ENCODE measurements at regions of chr11 and their contacts with region 1.

Region 1: DNA sequence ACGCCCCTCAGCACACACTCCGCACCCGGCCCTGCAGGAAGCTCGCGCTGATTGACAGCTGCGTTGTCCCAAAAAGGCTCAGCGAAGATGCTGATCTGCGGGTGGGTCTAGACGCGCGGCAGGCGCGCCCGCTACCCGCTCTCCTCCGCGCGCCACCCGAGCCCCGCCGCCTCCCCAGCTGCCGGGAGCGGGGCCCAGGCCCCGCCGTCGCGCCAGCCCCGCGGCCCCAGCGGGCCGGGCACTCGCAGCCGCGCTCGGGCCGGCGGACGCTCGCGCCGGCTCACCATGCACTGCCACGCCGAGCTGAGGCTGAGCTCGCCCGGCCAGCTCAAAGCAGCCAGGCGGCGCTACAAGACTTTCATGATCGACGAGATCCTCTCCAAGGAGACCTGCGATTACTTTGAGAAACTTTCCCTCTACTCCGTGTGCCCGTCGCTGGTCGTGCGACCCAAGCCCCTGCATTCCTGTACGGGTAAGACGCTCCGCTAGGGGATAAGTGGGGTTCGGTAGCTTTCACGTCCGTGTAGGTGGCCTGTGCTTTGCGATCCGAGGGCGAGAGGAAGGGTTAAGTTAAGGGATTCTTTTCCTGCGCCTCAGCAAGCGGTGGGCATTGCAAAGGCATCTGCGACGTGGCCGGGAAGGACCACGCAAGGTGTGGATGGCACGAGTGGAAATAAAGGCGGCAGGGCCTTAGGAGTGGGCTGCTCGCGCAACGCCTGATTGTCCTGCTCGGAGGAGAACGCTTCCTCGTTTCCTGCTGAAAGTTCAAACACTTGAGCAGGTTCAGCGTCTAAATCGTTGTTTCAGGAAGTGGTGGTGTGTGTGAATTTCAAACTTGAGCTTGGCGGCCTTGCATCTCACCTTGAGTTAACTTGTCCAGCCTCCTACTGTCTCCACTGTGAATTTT is at the start of gene BARX2:
- DNase-seq: peak; percentile 47
- H3K4me3 ChIP-seq: no peak within 1 kb of the TSS
- H3K27ac ChIP-seq: no peak within 1 kb of the TSS
- H3K4me1 ChIP-seq: peaks cover 9% of the 10 kb centered on the region
- H3K27me3 ChIP-seq: peaks cover 59 to 71% of the 10 kb centered on the region in 2 experiments
- CTCF ChIP-seq: peak; percentile 27 to 54
- POLR2A ChIP-seq: no peak
- total RNA-seq, gene BARX2: not detected in 2 replicates

Region 2: GRCh38 chr11:129323896-129324512 is 52.0 kb before region 1 on chr11:
- CTCF ChIA-PET with region 1: no interaction called
- POLR2A ChIA-PET with region 1: no interaction called
- dilution Hi-C with region 1: no loop called
- intact Hi-C with region 1: no loop called
- DNase-seq: no peak
- H3K4me3 ChIP-seq: no peak overlapping the region
- H3K27ac ChIP-seq: no peak overlapping the region
- H3K4me1 ChIP-seq: no peaks in the 10 kb centered on the region
- H3K27me3 ChIP-seq: peaks cover 0 to 8% of the 10 kb centered on the region in 2 experiments
- CTCF ChIP-seq: no peak
- POLR2A ChIP-seq: no peak

Region 3: GRCh38 chr11:129364143-129364654 is 11.8 kb before region 1 on chr11:
- CTCF ChIA-PET with region 1: interaction called, 14 read pairs
- POLR2A ChIA-PET with region 1: no interaction called
- dilution Hi-C with region 1: no loop called
- intact Hi-C with region 1: no loop called
- DNase-seq: peak; percentile 87
- H3K4me3 ChIP-seq: no peak overlapping the region
- H3K27ac ChIP-seq: no peak overlapping the region
- H3K4me1 ChIP-seq: no peaks in the 10 kb centered on the region
- H3K27me3 ChIP-seq: peaks cover 16 to 47% of the 10 kb centered on the region in 2 experiments
- CTCF ChIP-seq: peak; percentile 99 to 100
- POLR2A ChIP-seq: no peak

Region 4: GRCh38 chr11:129395432-129395831 is 19.4 kb after region 1 on chr11:
- CTCF ChIA-PET with region 1: interaction called, 12 read pairs
- POLR2A ChIA-PET with region 1: no interaction called
- dilution Hi-C with region 1: no loop called
- intact Hi-C with region 1: no loop called
- DNase-seq: no peak
- H3K4me3 ChIP-seq: no peak overlapping the region
- H3K27ac ChIP-seq: no peak overlapping the region
- H3K4me1 ChIP-seq: no peaks in the 10 kb centered on the region
- H3K27me3 ChIP-seq: no peaks in the 10 kb centered on the region
- CTCF ChIP-seq: no peak
- POLR2A ChIP-seq: no peak

Region 5: DNA sequence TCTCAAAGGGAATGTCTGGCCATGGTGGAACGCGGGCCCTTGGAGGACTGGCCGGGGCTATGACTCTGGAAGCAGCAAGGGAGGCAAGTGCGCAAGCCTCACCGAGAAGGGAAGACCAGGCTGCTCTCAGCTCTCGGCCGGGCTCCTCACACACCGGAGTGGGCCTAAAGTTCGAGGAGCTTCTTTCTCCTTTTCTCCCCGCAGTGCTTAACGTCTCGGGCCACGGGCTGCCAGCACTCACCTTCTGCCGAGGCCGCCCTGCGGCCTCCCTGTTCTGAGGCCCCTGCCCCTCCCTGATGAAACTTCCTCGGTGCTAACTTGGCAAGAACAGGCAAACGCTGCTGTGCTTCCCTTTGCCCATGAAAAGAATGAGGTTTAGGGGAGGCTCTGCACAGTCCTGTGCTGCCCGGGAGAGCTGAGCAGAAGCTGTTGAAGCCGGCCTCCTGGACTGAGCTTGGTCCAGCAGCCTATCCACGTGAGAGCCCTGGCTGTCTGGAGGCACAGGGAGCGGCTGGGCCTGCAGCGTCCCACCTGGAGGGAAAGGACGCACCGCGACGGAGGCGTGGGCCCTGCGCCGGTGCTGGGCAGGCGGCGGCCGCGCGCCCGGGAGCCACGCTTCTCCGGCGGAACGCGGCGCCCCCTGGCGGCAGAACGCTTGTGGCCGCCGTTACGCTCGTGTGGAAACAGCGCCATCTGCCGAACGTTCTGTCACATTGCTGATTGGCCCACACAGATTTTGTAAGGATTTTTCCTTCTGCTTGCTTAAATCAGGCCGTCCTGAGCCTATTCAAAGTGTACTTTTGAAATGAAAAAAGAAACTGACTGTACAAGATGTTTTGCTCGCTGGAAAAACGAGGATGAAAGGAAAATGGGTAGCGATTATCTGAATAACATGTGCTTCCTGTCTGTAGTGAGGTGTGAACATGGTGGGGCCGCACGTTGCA is 374.6 kb after region 1 on chr11:
- CTCF ChIA-PET with region 1: interaction called, 43 read pairs
- POLR2A ChIA-PET with region 1: no interaction called
- dilution Hi-C with region 1: no loop called
- intact Hi-C with region 1: loop called (anchors 1 kb)
- DNase-seq: peak; percentile 72
- H3K4me3 ChIP-seq: no peak overlapping the region
- H3K27ac ChIP-seq: no peak overlapping the region
- H3K4me1 ChIP-seq: no peaks in the 10 kb centered on the region
- H3K27me3 ChIP-seq: peaks cover 0 to 4% of the 10 kb centered on the region in 2 experiments
- CTCF ChIP-seq: peak; percentile 96 to 98
- POLR2A ChIP-seq: no peak